CD8-positive, alpha-beta T cell (primary cell): ENCODE measurements at regions of chr1 and their contacts with region 1.

Region 1: GRCh38 chr1:93304716-93305138 is 41.0 kb upstream of the DR1 start:
- DNase-seq: peak in 7 of 9 experiments; percentile 15 to 77 (median 53)
- ATAC-seq: peak; percentile 71
- H3K4me3 ChIP-seq: no peak overlapping the region
- H3K4me3 Mint-ChIP-seq: no peak overlapping the region
- H3K27ac ChIP-seq: no peak overlapping the region
- H3K27ac Mint-ChIP-seq: no peak overlapping the region
- H3K4me1 ChIP-seq: no peaks in the 10 kb centered on the region
- H3K4me1 Mint-ChIP-seq: no peaks in the 10 kb centered on the region
- H3K27me3 ChIP-seq: no peaks in the 10 kb centered on the region
- H3K27me3 Mint-ChIP-seq: no peaks in the 10 kb centered on the region
- CTCF ChIP-seq: peak; percentile 95

Region 2: DNA sequence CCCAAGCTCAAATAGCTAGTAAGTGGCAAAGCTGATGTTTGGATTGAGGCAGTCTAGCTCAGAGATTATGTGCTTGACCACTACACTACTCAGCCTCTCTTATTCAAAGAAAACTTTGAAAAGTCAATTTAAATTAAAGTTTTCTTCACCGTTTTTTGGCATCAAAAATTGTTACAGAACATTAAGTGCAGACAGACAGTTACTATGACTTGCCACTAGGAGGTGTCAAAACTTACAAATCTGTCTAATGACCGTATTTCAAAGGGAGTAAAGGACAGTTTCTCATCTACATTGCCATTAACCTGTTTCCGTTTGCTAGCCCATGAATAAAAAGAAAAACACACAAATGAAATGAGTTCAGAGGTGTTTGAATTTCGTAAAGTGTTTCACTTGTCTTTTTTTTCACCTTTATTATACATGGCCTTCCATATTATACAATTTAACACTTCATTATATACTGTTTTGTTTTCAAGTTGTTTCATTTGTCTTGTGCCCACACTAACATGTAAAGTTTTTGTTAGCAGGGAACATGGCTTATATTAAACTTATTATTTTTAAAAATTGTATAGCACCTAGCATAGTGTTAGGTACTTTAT is 283.1 kb before region 1 on chr1:
- CTCF ChIA-PET with region 1: interaction called, 4 read pairs
- POLR2A ChIA-PET with region 1: no interaction called
- intact Hi-C with region 1: loop called in 1 of 2 experiments (anchors 1 kb)
- DNase-seq: peak in 3 of 9 experiments; percentile 7 to 72 (median 57)
- ATAC-seq: peak; percentile 79
- H3K4me3 ChIP-seq: no peak overlapping the region
- H3K4me3 Mint-ChIP-seq: no peak overlapping the region
- H3K27ac ChIP-seq: no peak overlapping the region
- H3K27ac Mint-ChIP-seq: no peak overlapping the region
- H3K4me1 ChIP-seq: no peaks in the 10 kb centered on the region
- H3K4me1 Mint-ChIP-seq: peaks cover 3% of the 10 kb centered on the region
- H3K27me3 ChIP-seq: no peaks in the 10 kb centered on the region
- H3K27me3 Mint-ChIP-seq: peaks cover 11% of the 10 kb centered on the region
- CTCF ChIP-seq: peak; percentile 96

Region 3: DNA sequence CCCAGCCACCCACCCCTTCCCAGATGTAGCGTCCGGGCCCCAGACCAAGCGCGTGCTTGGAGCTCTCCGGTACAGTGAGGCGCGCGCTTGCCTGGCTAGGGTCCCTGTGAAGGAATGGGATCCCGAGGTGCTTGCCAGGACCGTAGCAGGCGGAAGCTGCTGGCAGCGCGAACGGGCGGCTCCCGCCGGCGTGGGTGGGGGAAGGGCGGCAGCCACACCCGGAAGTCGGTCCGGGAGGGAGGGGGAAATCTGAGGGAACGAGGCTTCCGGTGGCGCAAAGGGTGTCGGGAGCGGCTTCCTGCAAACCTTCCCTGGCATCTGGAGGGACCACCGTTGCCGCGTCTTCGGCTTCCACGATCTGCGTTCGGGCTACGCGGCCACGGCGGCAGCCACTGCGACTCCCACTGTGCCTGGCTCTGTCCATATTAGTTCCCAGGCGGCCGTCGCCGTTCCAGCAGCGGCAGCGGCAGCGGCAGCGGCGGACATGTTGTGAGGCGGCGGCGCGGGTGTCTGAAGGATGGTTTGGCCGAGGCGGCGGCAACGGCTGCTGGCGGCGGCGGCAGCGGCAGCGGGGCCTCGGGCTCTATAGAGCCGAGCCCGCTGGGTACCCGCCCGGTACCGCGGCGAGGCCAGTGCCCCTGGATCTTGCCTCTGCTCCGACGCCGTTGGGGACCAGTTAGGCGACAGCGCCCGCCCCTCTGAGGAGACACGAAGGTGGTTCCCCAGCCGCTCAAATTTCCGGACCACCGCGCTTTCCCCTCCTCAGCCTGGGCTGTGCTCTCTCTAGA is 41.1 kb after region 1 on chr1 and contains the start of gene DR1:
- CTCF ChIA-PET with region 1: interaction called, 14 read pairs
- POLR2A ChIA-PET with region 1: no interaction called
- intact Hi-C with region 1: loop called (anchors 5 kb)
- DNase-seq: peak; percentile 81 to 94 (median 90)
- ATAC-seq: peak; percentile 74
- H3K4me3 ChIP-seq: peak within 1 kb of the TSS; percentile 80 to 81
- H3K4me3 Mint-ChIP-seq: peak within 1 kb of the TSS; percentile 95
- H3K27ac ChIP-seq: peak within 1 kb of the TSS; percentile 72 to 91
- H3K27ac Mint-ChIP-seq: peak within 1 kb of the TSS; percentile 98
- H3K4me1 ChIP-seq: peaks cover 32% of the 10 kb centered on the region
- H3K4me1 Mint-ChIP-seq: peaks cover 51% of the 10 kb centered on the region
- H3K27me3 ChIP-seq: no peaks in the 10 kb centered on the region
- H3K27me3 Mint-ChIP-seq: no peaks in the 10 kb centered on the region
- CTCF ChIP-seq: no peak
- total RNA-seq, gene DR1: 49.1 to 49.9 TPM

Region 4: GRCh38 chr1:93437976-93438605 is 133.4 kb after region 1 on chr1:
- CTCF ChIA-PET with region 1: interaction called, 9 read pairs
- POLR2A ChIA-PET with region 1: no interaction called
- intact Hi-C with region 1: loop called (anchors 10 kb)
- DNase-seq: peak in 2 of 9 experiments; percentile 45 to 59
- ATAC-seq: peak; percentile 52
- H3K4me3 ChIP-seq: no peak overlapping the region
- H3K4me3 Mint-ChIP-seq: no peak overlapping the region
- H3K27ac ChIP-seq: no peak overlapping the region
- H3K27ac Mint-ChIP-seq: no peak overlapping the region
- H3K4me1 ChIP-seq: no peaks in the 10 kb centered on the region
- H3K4me1 Mint-ChIP-seq: no peaks in the 10 kb centered on the region
- H3K27me3 ChIP-seq: no peaks in the 10 kb centered on the region
- H3K27me3 Mint-ChIP-seq: peaks cover 11% of the 10 kb centered on the region
- CTCF ChIP-seq: peak; percentile 52

Region 5: GRCh38 chr1:93502561-93502960 is 197.8 kb after region 1 on chr1:
- CTCF ChIA-PET with region 1: no interaction called
- POLR2A ChIA-PET with region 1: no interaction called
- intact Hi-C with region 1: loop called in 1 of 2 experiments (anchors 10 kb)
- DNase-seq: no peak
- ATAC-seq: no peak
- H3K4me3 ChIP-seq: no peak overlapping the region
- H3K4me3 Mint-ChIP-seq: no peak overlapping the region
- H3K27ac ChIP-seq: no peak overlapping the region
- H3K27ac Mint-ChIP-seq: no peak overlapping the region
- H3K4me1 ChIP-seq: no peaks in the 10 kb centered on the region
- H3K4me1 Mint-ChIP-seq: no peaks in the 10 kb centered on the region
- H3K27me3 ChIP-seq: peaks cover 0 to 1% of the 10 kb centered on the region in 2 experiments
- H3K27me3 Mint-ChIP-seq: peaks cover 8% of the 10 kb centered on the region
- CTCF ChIP-seq: no peak

Region 6: DNA sequence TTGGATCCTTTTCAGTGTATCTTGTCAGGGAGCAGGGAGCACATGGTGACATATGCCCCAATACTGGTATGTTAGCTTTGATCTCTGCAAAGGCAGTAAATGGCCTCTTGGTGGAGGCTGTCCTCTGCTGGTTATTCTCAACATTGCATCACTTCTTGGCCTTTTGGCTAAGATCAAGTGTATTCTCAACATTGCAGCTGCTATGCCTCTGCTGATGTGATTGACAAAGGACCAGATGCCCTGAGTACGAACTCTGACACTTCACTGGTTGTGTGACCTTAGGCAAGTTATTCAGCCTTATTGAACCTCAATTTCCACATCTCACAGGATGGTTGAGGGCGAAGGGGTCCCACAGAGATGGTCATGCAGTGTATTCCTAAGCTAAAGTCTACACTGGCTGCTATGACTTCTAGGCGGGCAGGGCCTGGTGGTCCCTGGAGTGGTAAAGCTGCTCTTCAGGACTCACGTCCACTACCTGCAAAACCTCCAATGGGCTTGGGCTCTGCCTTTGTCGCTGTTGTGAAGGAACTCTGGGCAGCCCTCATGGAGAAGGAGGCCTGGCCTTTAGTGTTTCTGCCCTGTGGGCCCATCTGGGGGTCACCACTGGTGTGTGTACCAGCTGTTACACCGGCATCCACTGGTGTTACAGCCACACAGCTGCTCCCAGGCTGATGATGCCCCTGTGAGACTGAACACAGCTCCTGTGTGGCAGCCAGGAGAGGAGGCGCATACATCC is 509.5 kb after region 1 on chr1:
- CTCF ChIA-PET with region 1: interaction called, 6 read pairs
- POLR2A ChIA-PET with region 1: no interaction called
- intact Hi-C with region 1: loop called (anchors 10 kb)
- DNase-seq: peak in 6 of 9 experiments; percentile 9 to 68 (median 50)
- ATAC-seq: peak; percentile 29
- H3K4me3 ChIP-seq: no peak overlapping the region
- H3K4me3 Mint-ChIP-seq: no peak overlapping the region
- H3K27ac ChIP-seq: no peak overlapping the region
- H3K27ac Mint-ChIP-seq: no peak overlapping the region
- H3K4me1 ChIP-seq: peaks cover 9% of the 10 kb centered on the region
- H3K4me1 Mint-ChIP-seq: peaks cover 19% of the 10 kb centered on the region
- H3K27me3 ChIP-seq: no peaks in the 10 kb centered on the region
- H3K27me3 Mint-ChIP-seq: no peaks in the 10 kb centered on the region
- CTCF ChIP-seq: peak; percentile 50